ENCODE measurements at regions of chr16 and their contacts with region 1.

Region 1: GRCh38 chr16:63289852-63290460 is 1253.7 kb upstream of the CDH8 start:
- DNase-seq: peak; percentile 70 to 81
- H3K4me3 ChIP-seq: no peak overlapping the region
- H3K4me1 ChIP-seq: peaks cover 10% of the 10 kb centered on the region
- H3K27me3 ChIP-seq: no peaks in the 10 kb centered on the region

Region 2: DNA sequence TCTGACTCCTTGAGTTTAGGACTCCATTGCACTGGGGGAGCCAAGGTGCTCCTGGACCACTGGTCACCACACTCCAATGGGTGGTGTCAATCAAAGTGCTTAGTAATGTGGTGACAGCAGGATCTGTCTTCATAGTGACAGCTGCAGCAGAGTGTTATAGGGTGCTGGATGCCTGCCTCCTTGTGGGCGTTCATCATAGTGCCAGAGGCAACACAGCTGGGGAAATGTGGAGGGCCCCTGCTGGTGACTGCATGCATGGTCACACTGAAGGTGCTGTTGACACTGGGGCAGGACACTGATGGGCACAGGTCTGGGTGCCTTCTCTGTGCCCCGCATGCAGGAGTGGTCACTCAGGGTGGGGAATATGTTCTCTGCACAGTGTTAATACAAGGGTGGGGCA is 1076.2 kb before region 1 on chr16:
- in situ Hi-C with region 1: loop called (anchors 25 kb)
- DNase-seq: peak in 1 of 2 experiments; percentile 34
- H3K4me3 ChIP-seq: no peak overlapping the region
- H3K4me1 ChIP-seq: peaks cover 12% of the 10 kb centered on the region
- H3K27me3 ChIP-seq: no peaks in the 10 kb centered on the region

Region 3: DNA sequence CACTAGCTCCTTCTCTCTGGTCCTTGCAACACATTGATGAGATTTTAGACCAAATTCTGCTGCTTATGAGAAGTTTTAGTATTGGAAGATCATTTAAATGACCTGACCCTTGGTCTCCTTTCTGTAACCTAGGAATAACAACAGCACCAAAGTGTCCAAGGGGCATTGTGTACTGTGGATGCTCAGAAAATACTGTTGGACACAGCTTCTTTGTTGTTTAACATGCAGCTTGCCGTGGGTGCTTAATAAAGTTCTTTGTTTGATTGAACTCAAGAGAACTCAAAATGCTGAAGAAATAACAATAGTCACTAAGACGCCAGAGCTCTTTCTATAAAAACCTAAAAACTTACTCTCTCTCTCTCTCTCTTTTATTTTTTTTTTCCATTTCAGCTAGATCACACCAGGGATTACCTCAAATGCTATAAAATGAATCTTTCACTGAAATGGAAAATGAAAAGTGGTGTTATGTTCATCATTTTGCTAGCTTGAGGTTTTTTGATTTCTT is 704.9 kb before region 1 on chr16:
- in situ Hi-C with region 1: loop called (anchors 25 kb)
- DNase-seq: peak; percentile 23 to 64
- H3K4me3 ChIP-seq: no peak overlapping the region
- H3K4me1 ChIP-seq: peaks cover 27% of the 10 kb centered on the region
- H3K27me3 ChIP-seq: no peaks in the 10 kb centered on the region

Region 4: GRCh38 chr16:62692685-62693084 is 597.3 kb before region 1 on chr16:
- in situ Hi-C with region 1: loop called (anchors 25 kb)
- DNase-seq: peak in 1 of 2 experiments; percentile 36
- H3K4me3 ChIP-seq: no peak overlapping the region
- H3K4me1 ChIP-seq: peaks cover 11% of the 10 kb centered on the region
- H3K27me3 ChIP-seq: no peaks in the 10 kb centered on the region

Region 5: GRCh38 chr16:62869837-62870236 is 420.1 kb before region 1 on chr16:
- in situ Hi-C with region 1: loop called (anchors 10 kb)
- DNase-seq: no peak
- H3K4me3 ChIP-seq: no peak overlapping the region
- H3K4me1 ChIP-seq: peaks cover 15% of the 10 kb centered on the region
- H3K27me3 ChIP-seq: no peaks in the 10 kb centered on the region

Region 6: DNA sequence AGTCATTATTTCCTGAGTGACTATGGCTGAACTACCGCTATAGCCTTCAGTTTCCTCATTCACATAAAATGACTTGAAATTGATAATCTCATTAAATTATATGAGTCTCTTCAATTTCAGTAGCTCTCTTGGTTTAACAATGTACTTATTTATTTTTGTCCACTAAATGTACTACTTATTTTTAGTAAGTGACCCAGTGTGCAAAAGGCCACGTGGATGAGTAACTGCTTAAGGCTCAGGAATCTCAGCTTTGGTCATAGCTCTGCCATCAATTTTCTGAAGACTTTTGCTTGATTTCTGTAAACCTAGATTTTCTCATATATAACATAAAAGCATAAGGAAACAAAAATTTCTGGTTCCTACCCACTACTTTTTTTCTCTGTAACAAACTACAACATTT is 120.9 kb before region 1 on chr16:
- in situ Hi-C with region 1: no loop called
- DNase-seq: no peak
- H3K4me3 ChIP-seq: no peak overlapping the region
- H3K4me1 ChIP-seq: no peaks in the 10 kb centered on the region; the same call in 1 of the 2 replicates
- H3K27me3 ChIP-seq: no peaks in the 10 kb centered on the region

Region 7: GRCh38 chr16:63512910-63513309 is 223.0 kb after region 1 on chr16:
- in situ Hi-C with region 1: no loop called
- DNase-seq: no peak
- H3K4me3 ChIP-seq: no peak overlapping the region
- H3K4me1 ChIP-seq: no peaks in the 10 kb centered on the region
- H3K27me3 ChIP-seq: peaks cover 3% of the 10 kb centered on the region

Region 8: GRCh38 chr16:63960321-63960720 is 670.4 kb after region 1 on chr16:
- in situ Hi-C with region 1: no loop called
- DNase-seq: no peak
- H3K4me3 ChIP-seq: no peak overlapping the region
- H3K4me1 ChIP-seq: no peaks in the 10 kb centered on the region
- H3K27me3 ChIP-seq: no peaks in the 10 kb centered on the region